ENCODE measurements at regions of chr18 and their contacts with region 1.

Region 1: DNA sequence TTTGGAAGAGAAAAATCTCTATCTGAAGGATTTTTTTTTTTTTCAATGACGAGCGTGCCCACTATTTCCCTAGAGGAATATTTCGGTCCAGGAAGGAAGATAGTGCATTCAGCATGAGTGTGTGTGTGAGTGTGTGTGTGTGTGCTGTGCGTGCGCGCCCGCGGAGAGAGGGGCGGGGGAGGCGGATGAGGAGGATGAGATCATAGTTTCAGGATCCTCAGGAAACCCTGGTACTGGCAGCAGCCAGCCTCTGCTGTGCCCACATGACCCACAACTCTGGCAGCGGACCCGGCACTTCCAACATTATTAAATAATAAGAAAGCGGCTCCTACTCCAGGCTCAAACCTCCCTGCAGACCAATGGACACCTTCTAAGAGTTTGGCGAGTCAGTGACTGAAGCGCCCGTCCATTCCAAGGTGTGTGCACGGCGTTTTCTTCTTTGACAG is 217.0 kb upstream of the DTNA start:
- DNase-seq: peak; percentile 64 to 90
- H3K4me3 ChIP-seq: peak overlapping the region; percentile 70 to 83
- H3K27ac ChIP-seq: peak overlapping the region; percentile 70 to 76
- H3K4me1 ChIP-seq: no peaks in the 10 kb centered on the region
- H3K27me3 ChIP-seq: no peaks in the 10 kb centered on the region
- CTCF ChIP-seq: no peak

Region 2: DNA sequence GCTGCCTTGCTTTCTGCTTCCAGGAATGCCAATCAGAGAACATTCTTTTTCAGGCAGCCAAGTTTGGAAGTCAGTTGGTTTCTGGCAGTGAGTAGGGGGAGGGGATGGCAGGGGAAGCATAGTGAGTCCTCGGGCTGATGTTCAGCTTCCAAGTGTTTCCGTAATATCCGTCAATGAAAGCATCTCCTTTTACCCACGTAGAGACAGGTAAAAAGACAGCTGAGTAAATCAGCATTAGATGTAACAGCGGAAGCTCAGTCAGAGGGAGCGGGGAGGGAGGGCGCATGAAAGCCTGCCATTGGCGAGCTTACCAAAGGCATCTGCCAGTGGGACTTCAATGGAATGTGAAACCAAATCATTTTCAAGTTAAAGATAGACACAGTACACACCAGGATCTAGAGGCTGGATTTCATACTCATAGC is 99.8 kb after region 1 on chr18:
- intact Hi-C with region 1: loop called (anchors 2 kb)
- DNase-seq: peak in 1 of 2 donors; percentile 78
- H3K4me3 ChIP-seq: peak overlapping the region; percentile 42 to 67
- H3K27ac ChIP-seq: peak overlapping the region; percentile 67 to 76
- H3K4me1 ChIP-seq: peaks cover 0 to 13% of the 10 kb centered on the region in 2 donors
- H3K27me3 ChIP-seq: no peaks in the 10 kb centered on the region
- CTCF ChIP-seq: no peak

Region 3: GRCh38 chr18:34643989-34644388 is 150.9 kb after region 1 on chr18:
- intact Hi-C with region 1: loop called (anchors 2 kb)
- DNase-seq: no peak
- H3K4me3 ChIP-seq: peak overlapping the region in 1 of 2 donors; percentile 37
- H3K27ac ChIP-seq: peak overlapping the region; percentile 31 to 35
- H3K4me1 ChIP-seq: peaks cover 0 to 6% of the 10 kb centered on the region in 2 donors
- H3K27me3 ChIP-seq: no peaks in the 10 kb centered on the region
- CTCF ChIP-seq: peak in 2 of 3 experiments; percentile 27 to 41

Region 4: DNA sequence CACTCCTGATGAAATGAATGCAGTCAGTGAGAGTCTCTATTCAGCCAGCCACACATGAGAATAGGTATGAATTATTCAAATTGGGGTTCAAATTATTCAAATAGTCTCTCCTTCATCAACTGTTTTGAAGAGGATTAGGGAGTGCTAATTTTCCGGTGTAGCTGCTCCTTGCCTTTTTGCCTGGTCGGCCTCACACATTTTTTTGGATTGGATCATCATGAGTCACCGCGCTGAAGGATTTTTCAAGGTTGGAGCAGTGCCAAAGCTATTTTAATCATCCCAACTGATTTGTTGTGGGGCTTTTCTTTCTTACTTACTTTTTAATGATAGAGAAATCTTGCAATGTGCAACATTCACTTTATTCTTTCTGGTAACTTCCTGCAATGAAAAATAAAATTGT is 214.5 kb after region 1 on chr18:
- intact Hi-C with region 1: loop called (anchors 5 kb)
- DNase-seq: peak in 1 of 2 donors; percentile 86
- H3K4me3 ChIP-seq: peak overlapping the region; percentile 18 to 25
- H3K27ac ChIP-seq: peak overlapping the region; percentile 62 to 63
- H3K4me1 ChIP-seq: peaks cover 9 to 28% of the 10 kb centered on the region in 2 donors
- H3K27me3 ChIP-seq: no peaks in the 10 kb centered on the region
- CTCF ChIP-seq: no peak

Region 5: GRCh38 chr18:34787931-34788532 is 294.9 kb after region 1 on chr18:
- intact Hi-C with region 1: loop called (anchors 5 kb)
- DNase-seq: no peak
- H3K4me3 ChIP-seq: no peak overlapping the region
- H3K27ac ChIP-seq: no peak overlapping the region
- H3K4me1 ChIP-seq: no peaks in the 10 kb centered on the region
- H3K27me3 ChIP-seq: no peaks in the 10 kb centered on the region
- CTCF ChIP-seq: peak; percentile 48 to 71 (median 68)

Region 6: GRCh38 chr18:34912010-34912721 is 419.0 kb after region 1 on chr18:
- intact Hi-C with region 1: loop called (anchors 10 kb)
- DNase-seq: no peak
- H3K4me3 ChIP-seq: no peak overlapping the region
- H3K27ac ChIP-seq: no peak overlapping the region
- H3K4me1 ChIP-seq: peaks cover 0 to 9% of the 10 kb centered on the region in 2 donors
- H3K27me3 ChIP-seq: no peaks in the 10 kb centered on the region
- CTCF ChIP-seq: no peak